ENCODE measurements at regions of chr6 and their contacts with region 1.

Region 1: GRCh38 chr6:157597446-157598312 is 216.7 kb downstream of the ZDHHC14 start:
- DNase-seq: no peak
- H3K4me3 ChIP-seq: no peak overlapping the region
- H3K27ac ChIP-seq: peak overlapping the region in 3 of 4 donors; percentile 3 to 45 (median 4)
- H3K4me1 ChIP-seq: peaks cover 0 to 26% (median 8%) of the 10 kb centered on the region in 3 donors
- H3K27me3 ChIP-seq: no peaks in the 10 kb centered on the region
- CTCF ChIP-seq: peak in 5 of 6 experiments; percentile 23 to 58 (median 47)
- POLR2A ChIP-seq: no peak

Region 2: GRCh38 chr6:157314705-157315321 is 282.9 kb before region 1 on chr6:
- intact Hi-C with region 1: loop called (anchors 5 kb)
- DNase-seq: no peak
- H3K4me3 ChIP-seq: no peak overlapping the region
- H3K27ac ChIP-seq: no peak overlapping the region
- H3K4me1 ChIP-seq: peaks cover 0 to 14% (median 11%) of the 10 kb centered on the region in 3 donors
- H3K27me3 ChIP-seq: no peaks in the 10 kb centered on the region
- CTCF ChIP-seq: peak; percentile 72 to 89 (median 86)
- POLR2A ChIP-seq: no peak

Region 3: GRCh38 chr6:157376706-157377230 is 220.9 kb before region 1 on chr6:
- intact Hi-C with region 1: no loop called
- DNase-seq: no peak
- H3K4me3 ChIP-seq: no peak overlapping the region
- H3K27ac ChIP-seq: no peak overlapping the region
- H3K4me1 ChIP-seq: peaks cover 0 to 8% (median 3%) of the 10 kb centered on the region in 3 donors
- H3K27me3 ChIP-seq: no peaks in the 10 kb centered on the region
- CTCF ChIP-seq: no peak
- POLR2A ChIP-seq: no peak

Region 4: GRCh38 chr6:157667211-157668008 is 69.7 kb after region 1 on chr6:
- intact Hi-C with region 1: no loop called
- DNase-seq: no peak
- H3K4me3 ChIP-seq: no peak overlapping the region
- H3K27ac ChIP-seq: no peak overlapping the region
- H3K4me1 ChIP-seq: peaks cover 5 to 22% (median 14%) of the 10 kb centered on the region in 3 donors
- H3K27me3 ChIP-seq: no peaks in the 10 kb centered on the region
- CTCF ChIP-seq: peak; percentile 72 to 87 (median 82)
- POLR2A ChIP-seq: no peak

Measured in esophagus squamous epithelium (tissue), 5 donors.